Activated B cell treated with CpG ODN at 0.5 μM for 24 hours (primary cell): ENCODE measurements at regions of chr7 and their contacts with region 1.

Region 1: DNA sequence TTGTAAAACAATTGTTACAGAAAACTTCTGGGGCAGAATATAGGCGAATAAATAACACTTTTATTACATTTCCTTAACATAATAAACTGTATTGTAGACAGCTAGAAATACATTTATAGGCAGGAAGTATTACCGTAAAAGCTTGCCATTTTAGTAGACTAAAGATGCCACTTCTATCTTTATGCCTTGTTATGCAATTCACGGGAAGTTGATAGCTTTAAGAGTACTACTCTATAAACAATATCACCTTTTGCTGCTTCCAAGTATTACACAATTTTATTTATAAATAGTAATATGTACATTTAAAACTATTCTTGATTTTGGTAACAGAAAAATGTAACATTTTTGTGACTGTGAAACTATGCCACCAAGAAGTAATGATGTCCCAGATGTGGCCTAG is 37.9 kb downstream of the PALS2 start:
- DNase-seq: no peak
- ATAC-seq: no peak
- H3K4me3 Mint-ChIP-seq: no peak overlapping the region
- H3K27ac Mint-ChIP-seq: no peak overlapping the region
- H3K4me1 Mint-ChIP-seq: peaks cover 22% of the 10 kb centered on the region
- H3K27me3 Mint-ChIP-seq: no peaks in the 10 kb centered on the region
- CTCF ChIP-seq: no peak

Region 2: GRCh38 chr7:24419511-24419910 is 191.6 kb before region 1 on chr7:
- CTCF ChIA-PET with region 1: no interaction called
- POLR2A ChIA-PET with region 1: no interaction called
- intact Hi-C with region 1: no loop called
- DNase-seq: no peak
- ATAC-seq: no peak
- H3K4me3 Mint-ChIP-seq: no peak overlapping the region
- H3K27ac Mint-ChIP-seq: no peak overlapping the region
- H3K4me1 Mint-ChIP-seq: no peaks in the 10 kb centered on the region
- H3K27me3 Mint-ChIP-seq: no peaks in the 10 kb centered on the region
- CTCF ChIP-seq: no peak

Region 3: GRCh38 chr7:24595671-24596418 is 15.3 kb before region 1 on chr7:
- CTCF ChIA-PET with region 1: no interaction called
- POLR2A ChIA-PET with region 1: no interaction called
- intact Hi-C with region 1: loop called (anchors 2 kb)
- DNase-seq: no peak
- ATAC-seq: peak; percentile 73
- H3K4me3 Mint-ChIP-seq: no peak overlapping the region
- H3K27ac Mint-ChIP-seq: no peak overlapping the region
- H3K4me1 Mint-ChIP-seq: peaks cover 4% of the 10 kb centered on the region
- H3K27me3 Mint-ChIP-seq: no peaks in the 10 kb centered on the region
- CTCF ChIP-seq: no peak

Region 4: DNA sequence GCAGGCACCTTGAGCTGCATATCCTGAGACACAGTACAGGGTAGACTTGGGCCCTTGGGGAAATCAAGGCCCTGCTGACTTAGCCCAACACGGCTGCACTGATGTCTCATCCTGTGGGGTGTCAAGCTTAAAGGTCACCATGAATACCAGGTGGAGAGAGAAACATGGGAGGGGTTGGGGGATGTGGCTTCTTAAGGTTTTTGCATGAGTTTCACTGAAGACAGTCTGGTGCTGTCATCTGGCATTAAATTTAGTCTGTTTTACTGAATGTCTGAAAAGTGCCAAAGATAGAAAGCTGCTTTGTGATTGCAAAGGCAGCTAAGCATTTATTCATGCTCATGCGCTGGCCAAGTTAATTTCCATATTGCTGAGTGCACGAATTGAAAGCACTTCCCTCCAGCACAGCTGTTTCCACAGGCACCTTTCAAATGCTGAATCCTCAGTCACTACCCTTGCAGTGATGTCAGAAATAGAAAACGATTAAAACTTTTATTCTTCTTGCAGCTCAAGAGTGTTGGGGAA is 266.7 kb after region 1 on chr7:
- CTCF ChIA-PET with region 1: no interaction called
- POLR2A ChIA-PET with region 1: no interaction called
- intact Hi-C with region 1: no loop called
- DNase-seq: no peak
- ATAC-seq: peak; percentile 90
- H3K4me3 Mint-ChIP-seq: peak overlapping the region; percentile 64
- H3K27ac Mint-ChIP-seq: peak overlapping the region; percentile 83
- H3K4me1 Mint-ChIP-seq: peaks cover 34% of the 10 kb centered on the region
- H3K27me3 Mint-ChIP-seq: no peaks in the 10 kb centered on the region
- CTCF ChIP-seq: no peak